ENCODE measurements at regions of chr16 and their contacts with region 1.

Region 1: DNA sequence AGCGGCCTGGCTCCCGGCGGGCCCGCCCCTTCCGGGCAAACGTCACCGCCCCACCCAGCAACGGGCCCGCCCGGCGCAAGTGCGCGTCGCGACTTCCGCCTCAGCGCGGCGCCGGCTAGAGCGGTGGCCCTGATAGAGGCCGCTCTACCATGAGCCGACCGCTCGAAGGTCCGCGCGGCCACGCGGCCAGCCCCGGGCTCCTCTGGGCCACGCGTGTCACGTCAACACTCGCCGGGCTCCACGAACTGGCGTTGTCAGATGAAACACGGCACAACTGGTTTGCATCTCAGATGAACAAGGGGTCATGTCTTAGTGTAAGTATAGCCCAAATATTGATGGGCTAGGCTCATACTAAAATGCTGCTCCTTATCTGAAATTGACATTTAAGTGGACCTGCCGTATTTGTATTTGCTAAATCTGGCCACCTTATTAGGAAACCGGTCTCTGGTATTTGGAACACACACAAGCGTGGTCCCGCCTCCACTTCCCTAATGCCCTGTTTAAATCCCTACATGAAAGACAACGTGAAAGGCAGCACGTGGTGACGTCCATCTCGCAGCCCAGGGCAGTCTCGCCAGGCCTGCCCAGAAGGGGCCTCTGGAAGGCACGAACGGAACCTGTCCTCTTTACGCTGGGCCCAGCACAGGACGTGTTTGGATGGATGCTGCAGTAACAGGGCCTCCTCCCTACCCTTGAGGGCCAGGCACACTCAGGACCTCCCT is at the start of gene ZNF598:
- DNase-seq: peak; percentile 86
- H3K4me3 Mint-ChIP-seq: peak within 1 kb of the TSS; percentile 79
- H3K27ac Mint-ChIP-seq: peak within 1 kb of the TSS; percentile 97
- H3K4me1 Mint-ChIP-seq: peaks cover 17% of the 10 kb centered on the region
- H3K27me3 Mint-ChIP-seq: no peaks in the 10 kb centered on the region
- CTCF ChIP-seq: no peak
- total RNA-seq, gene ZNF598: 177 and 252 TPM in 2 replicates

Region 2: GRCh38 chr16:1826691-1827575 is 183.0 kb before region 1 on chr16 and contains the starts of genes FAHD1 and HAGH:
- CTCF ChIA-PET with region 1: interaction called, 3 read pairs
- POLR2A ChIA-PET with region 1: interaction called, 13 read pairs
- intact Hi-C with region 1: no loop called
- DNase-seq: peak; percentile 89
- H3K4me3 Mint-ChIP-seq: peak within 1 kb of the TSS; percentile 94
- H3K27ac Mint-ChIP-seq: peak within 1 kb of the TSS; percentile 92
- H3K4me1 Mint-ChIP-seq: peaks cover 7% of the 10 kb centered on the region
- H3K27me3 Mint-ChIP-seq: no peaks in the 10 kb centered on the region
- CTCF ChIP-seq: no peak
- total RNA-seq, gene FAHD1: 18.4 and 21.4 TPM in 2 replicates
- total RNA-seq, gene HAGH: 44.5 and 69.8 TPM in 2 replicates

Region 3: DNA sequence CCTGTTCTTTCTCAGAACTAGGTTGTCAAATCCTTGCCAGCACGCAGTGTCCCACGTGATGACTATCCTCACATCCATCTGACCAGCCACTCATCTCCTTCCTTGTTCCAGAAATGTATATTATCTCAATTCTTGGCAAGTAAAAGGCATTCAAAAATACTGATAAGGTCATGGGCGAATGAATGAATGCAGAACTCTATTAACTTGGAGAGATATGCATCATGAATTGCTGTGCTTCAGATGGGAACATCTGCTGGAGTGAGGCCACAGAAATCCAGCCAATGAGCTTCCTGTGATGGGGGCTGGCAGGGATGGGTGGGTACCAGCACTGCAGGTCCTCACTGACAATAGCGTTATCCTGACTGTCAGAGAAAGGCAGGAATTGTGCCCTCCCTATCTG is 164.0 kb before region 1 on chr16:
- CTCF ChIA-PET with region 1: no interaction called
- POLR2A ChIA-PET with region 1: no interaction called
- intact Hi-C with region 1: no loop called
- DNase-seq: no peak
- H3K4me3 Mint-ChIP-seq: no peak overlapping the region
- H3K27ac Mint-ChIP-seq: no peak overlapping the region
- H3K4me1 Mint-ChIP-seq: no peaks in the 10 kb centered on the region
- H3K27me3 Mint-ChIP-seq: no peaks in the 10 kb centered on the region
- CTCF ChIP-seq: no peak

Region 4: GRCh38 chr16:1971796-1972489 is 38.0 kb before region 1 on chr16 and contains the start of gene TBL3:
- CTCF ChIA-PET with region 1: no interaction called
- POLR2A ChIA-PET with region 1: interaction called, 72 read pairs
- intact Hi-C with region 1: no loop called
- DNase-seq: peak; percentile 92
- H3K4me3 Mint-ChIP-seq: peak within 1 kb of the TSS; percentile 92
- H3K27ac Mint-ChIP-seq: peak within 1 kb of the TSS; percentile 95
- H3K4me1 Mint-ChIP-seq: peaks cover 13% of the 10 kb centered on the region
- H3K27me3 Mint-ChIP-seq: no peaks in the 10 kb centered on the region
- CTCF ChIP-seq: no peak
- total RNA-seq, gene TBL3: 25.8 and 26.8 TPM in 2 replicates

Region 5: DNA sequence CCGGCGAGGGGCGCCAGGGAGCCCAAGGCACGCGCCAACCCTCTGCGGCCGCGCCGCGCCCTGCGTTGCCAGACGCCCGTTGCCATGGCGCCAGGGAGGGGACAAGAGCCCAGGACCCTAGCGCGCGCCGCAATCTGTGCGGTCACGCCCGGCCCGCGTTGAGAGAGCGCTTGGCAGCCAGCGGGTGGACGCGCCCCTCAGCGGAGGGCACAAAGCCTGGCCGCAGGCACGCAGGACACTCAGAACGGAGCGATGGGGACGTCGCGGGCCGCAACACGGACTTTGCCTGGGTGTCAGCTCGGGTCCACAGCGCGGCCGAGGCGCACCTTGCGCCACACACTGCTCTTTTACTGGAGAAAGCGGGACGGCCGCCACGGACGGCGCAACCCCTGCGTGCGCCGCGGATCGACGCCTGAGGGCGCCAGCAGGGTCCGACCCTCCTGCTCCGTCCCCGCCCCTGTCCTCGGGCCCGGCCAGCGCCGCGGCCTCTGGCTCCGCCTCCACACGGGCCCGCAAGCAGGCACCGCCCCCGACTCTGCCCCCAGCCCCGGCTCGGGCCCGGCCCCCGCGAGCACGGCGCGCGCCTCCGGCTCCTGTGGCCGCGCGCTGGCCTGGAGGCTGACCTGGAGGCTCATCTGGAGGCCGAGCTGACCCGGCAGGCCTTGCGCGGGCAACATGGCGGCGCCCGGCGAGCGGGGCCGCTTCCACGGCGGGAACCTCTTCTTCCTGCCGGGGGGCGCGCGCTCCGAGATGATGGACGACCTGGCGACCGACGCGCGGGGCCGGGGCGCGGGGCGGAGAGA is 26.2 kb before region 1 on chr16 and contains the start of gene GFER:
- CTCF ChIA-PET with region 1: interaction called, 5 read pairs
- POLR2A ChIA-PET with region 1: interaction called, 59 read pairs
- intact Hi-C with region 1: no loop called
- DNase-seq: peak; percentile 82
- H3K4me3 Mint-ChIP-seq: peak within 1 kb of the TSS; percentile 76
- H3K27ac Mint-ChIP-seq: no peak within 1 kb of the TSS
- H3K4me1 Mint-ChIP-seq: peaks cover 10% of the 10 kb centered on the region
- H3K27me3 Mint-ChIP-seq: no peaks in the 10 kb centered on the region
- CTCF ChIP-seq: no peak
- total RNA-seq, gene GFER: 34.6 and 40.8 TPM in 2 replicates

Region 6: GRCh38 chr16:1993731-1994136 is 16.2 kb before region 1 on chr16:
- CTCF ChIA-PET with region 1: no interaction called
- POLR2A ChIA-PET with region 1: interaction called, 41 read pairs
- intact Hi-C with region 1: no loop called
- DNase-seq: peak; percentile 88
- H3K4me3 Mint-ChIP-seq: no peak overlapping the region
- H3K27ac Mint-ChIP-seq: peak overlapping the region; percentile 80
- H3K4me1 Mint-ChIP-seq: peaks cover 14% of the 10 kb centered on the region
- H3K27me3 Mint-ChIP-seq: no peaks in the 10 kb centered on the region
- CTCF ChIP-seq: no peak

Region 7: GRCh38 chr16:2047330-2048115 is 37.6 kb after region 1 on chr16 and contains the starts of genes NTHL1 and TSC2:
- CTCF ChIA-PET with region 1: interaction called, 7 read pairs
- POLR2A ChIA-PET with region 1: interaction called, 33 read pairs
- intact Hi-C with region 1: no loop called
- DNase-seq: peak; percentile 95
- H3K4me3 Mint-ChIP-seq: peak within 1 kb of the TSS; percentile 86
- H3K27ac Mint-ChIP-seq: peak within 1 kb of the TSS; percentile 63
- H3K4me1 Mint-ChIP-seq: peaks cover 23% of the 10 kb centered on the region
- H3K27me3 Mint-ChIP-seq: no peaks in the 10 kb centered on the region
- CTCF ChIP-seq: peak; percentile 39
- total RNA-seq, gene NTHL1: 16.4 and 17.7 TPM in 2 replicates
- total RNA-seq, gene TSC2: 99.8 and 136 TPM in 2 replicates

Region 8: GRCh38 chr16:2147981-2148671 is 138.2 kb after region 1 on chr16 and contains the start of gene RAB26:
- CTCF ChIA-PET with region 1: interaction called, 6 read pairs
- POLR2A ChIA-PET with region 1: interaction called, 32 read pairs
- intact Hi-C with region 1: no loop called
- DNase-seq: peak; percentile 91
- H3K4me3 Mint-ChIP-seq: peak within 1 kb of the TSS; percentile 59
- H3K27ac Mint-ChIP-seq: no peak within 1 kb of the TSS
- H3K4me1 Mint-ChIP-seq: peaks cover 8% of the 10 kb centered on the region
- H3K27me3 Mint-ChIP-seq: no peaks in the 10 kb centered on the region
- CTCF ChIP-seq: no peak
- total RNA-seq, gene RAB26: 0.81 and 1.0 TPM in 2 replicates